Tibial artery (tissue), 4 donors: ENCODE measurements at regions of chrX and their contacts with region 1.

Region 1: DNA sequence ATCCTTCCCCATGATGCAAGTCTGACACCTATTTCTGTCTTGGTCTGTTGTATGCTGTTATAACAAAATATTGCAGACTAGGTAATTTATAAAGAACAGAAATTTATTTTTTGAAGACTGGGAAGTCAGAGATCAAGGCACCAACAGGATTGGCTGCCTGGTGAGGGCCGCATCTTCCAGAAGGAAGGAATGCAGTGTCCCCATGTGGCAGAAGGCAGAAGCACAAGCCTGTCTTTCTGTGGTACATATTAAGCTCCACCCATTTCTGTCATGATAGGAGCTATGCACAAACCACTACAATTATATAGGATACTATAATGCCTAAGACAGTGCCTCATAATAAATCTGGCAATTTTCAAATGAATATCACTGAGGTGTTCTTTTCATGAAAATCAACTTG is 502.3 kb upstream of the DIAPH2 start:
- DNase-seq: no peak
- H3K4me3 ChIP-seq: no peak overlapping the region
- H3K27ac ChIP-seq: no peak overlapping the region
- H3K4me1 ChIP-seq: no peaks in the 10 kb centered on the region
- H3K27me3 ChIP-seq: no peaks in the 10 kb centered on the region
- CTCF ChIP-seq: peak in 1 of 2 experiments; percentile 27

Region 2: GRCh38 chrX:95764972-95765451 is 417.4 kb before region 1 on chrX:
- intact Hi-C with region 1: loop called (anchors 10 kb)
- DNase-seq: no peak
- H3K4me3 ChIP-seq: no peak overlapping the region
- H3K27ac ChIP-seq: no peak overlapping the region
- H3K4me1 ChIP-seq: no peaks in the 10 kb centered on the region
- H3K27me3 ChIP-seq: no peaks in the 10 kb centered on the region
- CTCF ChIP-seq: peak; percentile 33 to 45